ENCODE measurements at regions of chr14 and their contacts with region 1.

Region 1: DNA sequence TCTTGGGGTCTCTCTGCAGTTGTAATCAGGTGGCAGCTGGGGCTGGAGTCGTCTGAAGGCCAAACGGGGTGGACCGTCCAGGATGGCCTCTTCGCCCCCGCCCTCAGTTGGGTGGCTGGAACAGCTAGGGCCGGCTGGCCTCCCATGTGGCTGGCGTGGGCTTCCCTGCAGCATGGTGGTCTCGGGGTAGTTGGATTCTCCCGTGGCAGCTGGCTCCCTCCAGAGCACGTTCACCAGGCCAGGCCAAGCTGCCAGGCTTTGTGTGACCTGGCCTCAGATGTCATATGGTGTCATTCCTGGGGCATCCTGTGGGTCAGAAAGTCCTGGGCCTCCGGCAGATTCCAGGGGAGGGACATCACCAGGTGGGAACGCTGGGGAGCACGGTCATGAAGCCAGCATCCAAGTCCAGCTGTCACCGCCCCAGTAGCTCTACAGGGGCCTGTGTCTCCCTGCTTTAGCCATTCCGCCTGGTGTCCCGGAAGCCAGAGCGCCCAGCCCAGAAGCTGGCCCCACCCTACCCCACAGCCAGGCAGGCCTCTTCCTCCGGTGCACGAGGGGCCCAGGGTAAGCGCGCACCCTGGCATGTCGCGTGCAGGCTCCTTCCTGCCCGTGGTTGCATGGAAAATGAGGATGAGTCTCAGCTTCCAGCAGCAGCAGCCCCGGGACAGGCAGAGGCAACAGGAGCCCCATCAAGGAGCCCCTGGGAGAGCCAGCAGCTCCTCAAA is 1.3 kb upstream of the NUDT14 start:
- DNase-seq: no peak
- ATAC-seq: no peak
- H3K4me3 ChIP-seq: no peak overlapping the region
- H3K27ac ChIP-seq: no peak overlapping the region
- H3K4me1 ChIP-seq: no peaks in the 10 kb centered on the region; the same call in 1 of the 2 replicates
- H3K27me3 ChIP-seq: no peaks in the 10 kb centered on the region
- CTCF ChIP-seq: no peak

Region 2: GRCh38 chr14:105053421-105053820 is 129.0 kb before region 1 on chr14:
- CTCF ChIA-PET with region 1: no interaction called
- POLR2A ChIA-PET with region 1: interaction called, 10 read pairs
- in situ Hi-C with region 1: no loop called
- intact Hi-C with region 1: no loop called
- DNase-seq: no peak
- ATAC-seq: no peak
- H3K4me3 ChIP-seq: no peak overlapping the region
- H3K27ac ChIP-seq: no peak overlapping the region
- H3K4me1 ChIP-seq: no peaks in the 10 kb centered on the region
- H3K27me3 ChIP-seq: no peaks in the 10 kb centered on the region
- CTCF ChIP-seq: no peak

Region 3: GRCh38 chr14:105314287-105315200 is 132.1 kb after region 1 on chr14 and contains the start of gene PACS2:
- CTCF ChIA-PET with region 1: no interaction called
- POLR2A ChIA-PET with region 1: no interaction called
- in situ Hi-C with region 1: no loop called
- intact Hi-C with region 1: no loop called
- DNase-seq: no peak
- ATAC-seq: peak; percentile 86
- H3K4me3 ChIP-seq: peak within 1 kb of the TSS; percentile 61
- H3K27ac ChIP-seq: peak within 1 kb of the TSS; percentile 70
- H3K4me1 ChIP-seq: peaks cover 12% of the 10 kb centered on the region
- H3K27me3 ChIP-seq: no peaks in the 10 kb centered on the region
- CTCF ChIP-seq: no peak
- total RNA-seq, gene PACS2: 55.2 TPM

Region 4: GRCh38 chr14:105748194-105748578 is 565.7 kb after region 1 on chr14:
- CTCF ChIA-PET with region 1: no interaction called
- POLR2A ChIA-PET with region 1: no interaction called
- in situ Hi-C with region 1: no loop called
- intact Hi-C with region 1: no loop called
- DNase-seq: no peak
- ATAC-seq: 0 out of 2 replicates have a peak, but pooled peaks have one; percentile 22
- H3K4me3 ChIP-seq: no peak overlapping the region
- H3K27ac ChIP-seq: no peak overlapping the region
- H3K4me1 ChIP-seq: no peaks in the 10 kb centered on the region
- H3K27me3 ChIP-seq: no peaks in the 10 kb centered on the region
- CTCF ChIP-seq: no peak